CD8-positive, alpha-beta T cell (primary cell): ENCODE measurements at regions of chr14 and their contacts with region 1.

Region 1: GRCh38 chr14:64823305-64823861 is 56.3 kb downstream of the SPTB start:
- DNase-seq: peak; percentile 22 to 77 (median 62)
- ATAC-seq: peak; percentile 89
- H3K4me3 ChIP-seq: no peak overlapping the region
- H3K4me3 Mint-ChIP-seq: no peak overlapping the region
- H3K27ac ChIP-seq: no peak overlapping the region
- H3K27ac Mint-ChIP-seq: no peak overlapping the region
- H3K4me1 ChIP-seq: no peaks in the 10 kb centered on the region
- H3K4me1 Mint-ChIP-seq: peaks cover 6% of the 10 kb centered on the region
- H3K27me3 ChIP-seq: peaks cover 0 to 6% of the 10 kb centered on the region in 2 experiments
- H3K27me3 Mint-ChIP-seq: peaks cover 8% of the 10 kb centered on the region
- CTCF ChIP-seq: peak; percentile 75

Region 2: GRCh38 chr14:64835431-64835830 is 12.0 kb after region 1 on chr14:
- CTCF ChIA-PET with region 1: interaction called, 23 read pairs
- POLR2A ChIA-PET with region 1: no interaction called
- intact Hi-C with region 1: no loop called
- DNase-seq: no peak
- ATAC-seq: no peak
- H3K4me3 ChIP-seq: no peak overlapping the region
- H3K4me3 Mint-ChIP-seq: no peak overlapping the region
- H3K27ac ChIP-seq: no peak overlapping the region
- H3K27ac Mint-ChIP-seq: no peak overlapping the region
- H3K4me1 ChIP-seq: no peaks in the 10 kb centered on the region
- H3K4me1 Mint-ChIP-seq: no peaks in the 10 kb centered on the region
- H3K27me3 ChIP-seq: no peaks in the 10 kb centered on the region
- H3K27me3 Mint-ChIP-seq: peaks cover 11% of the 10 kb centered on the region
- CTCF ChIP-seq: no peak

Region 3: GRCh38 chr14:64841121-64841651 is 17.8 kb after region 1 on chr14:
- CTCF ChIA-PET with region 1: interaction called, 10 read pairs
- POLR2A ChIA-PET with region 1: no interaction called
- intact Hi-C with region 1: no loop called
- DNase-seq: no peak
- ATAC-seq: no peak
- H3K4me3 ChIP-seq: no peak overlapping the region
- H3K4me3 Mint-ChIP-seq: no peak overlapping the region
- H3K27ac ChIP-seq: no peak overlapping the region
- H3K27ac Mint-ChIP-seq: no peak overlapping the region
- H3K4me1 ChIP-seq: no peaks in the 10 kb centered on the region
- H3K4me1 Mint-ChIP-seq: no peaks in the 10 kb centered on the region
- H3K27me3 ChIP-seq: no peaks in the 10 kb centered on the region
- H3K27me3 Mint-ChIP-seq: peaks cover 31% of the 10 kb centered on the region
- CTCF ChIP-seq: no peak

Region 4: DNA sequence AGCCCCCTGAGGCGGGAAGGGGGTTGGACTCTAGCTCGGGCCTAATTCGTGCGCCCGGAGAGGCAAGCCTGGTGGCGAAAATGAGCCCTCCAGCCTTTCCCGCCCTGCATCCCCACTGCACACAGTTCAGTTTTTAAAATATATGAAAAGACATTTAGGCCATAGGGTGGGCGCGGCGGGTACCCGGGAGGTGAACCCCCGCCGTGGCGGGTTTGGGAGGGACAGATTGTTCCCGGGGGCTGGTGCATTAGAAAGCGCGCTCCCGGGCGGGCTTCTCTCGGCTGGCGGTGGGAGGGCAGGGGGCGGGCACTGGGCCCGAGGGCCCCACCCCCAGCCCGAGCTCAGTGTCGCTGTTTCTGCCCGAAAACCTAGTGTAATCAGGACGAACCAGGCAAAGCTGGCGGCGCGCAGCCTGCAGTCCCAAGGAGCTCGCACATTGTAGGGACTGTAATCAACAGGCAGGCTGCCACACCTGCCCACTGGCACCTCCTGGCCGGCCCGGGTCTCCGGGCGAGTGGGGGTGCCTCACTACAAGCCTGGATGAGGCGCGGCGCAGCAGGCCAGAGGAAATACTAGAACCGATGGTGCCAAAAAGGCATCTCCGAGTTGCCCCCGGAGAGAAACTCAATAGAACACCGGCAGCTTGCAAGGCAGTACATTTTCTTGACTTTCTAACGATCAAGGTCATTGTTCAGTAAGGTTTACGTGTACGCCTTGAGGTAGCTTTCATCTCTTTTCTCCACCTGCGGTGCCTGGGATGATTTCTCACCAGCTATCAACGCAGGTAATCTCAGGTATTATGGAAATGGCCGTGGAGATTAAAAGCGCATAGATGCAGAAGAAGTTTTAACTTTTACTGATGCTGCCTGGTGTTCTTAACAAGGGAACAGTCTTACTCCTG is 57.1 kb after region 1 on chr14:
- CTCF ChIA-PET with region 1: interaction called, 10 read pairs
- POLR2A ChIA-PET with region 1: no interaction called
- intact Hi-C with region 1: no loop called
- DNase-seq: peak; percentile 22 to 74 (median 59)
- ATAC-seq: peak; percentile 82
- H3K4me3 ChIP-seq: peak overlapping the region; percentile 51 to 62
- H3K4me3 Mint-ChIP-seq: peak overlapping the region; percentile 87
- H3K27ac ChIP-seq: no peak overlapping the region
- H3K27ac Mint-ChIP-seq: no peak overlapping the region
- H3K4me1 ChIP-seq: no peaks in the 10 kb centered on the region
- H3K4me1 Mint-ChIP-seq: peaks cover 8% of the 10 kb centered on the region
- H3K27me3 ChIP-seq: peaks cover 0 to 17% of the 10 kb centered on the region in 2 experiments
- H3K27me3 Mint-ChIP-seq: peaks cover 16% of the 10 kb centered on the region
- CTCF ChIP-seq: no peak

Region 5: GRCh38 chr14:64899958-64900357 is 76.6 kb after region 1 on chr14:
- CTCF ChIA-PET with region 1: interaction called, 11 read pairs
- POLR2A ChIA-PET with region 1: no interaction called
- intact Hi-C with region 1: no loop called
- DNase-seq: no peak
- ATAC-seq: no peak
- H3K4me3 ChIP-seq: no peak overlapping the region
- H3K4me3 Mint-ChIP-seq: no peak overlapping the region
- H3K27ac ChIP-seq: no peak overlapping the region
- H3K27ac Mint-ChIP-seq: no peak overlapping the region
- H3K4me1 ChIP-seq: no peaks in the 10 kb centered on the region
- H3K4me1 Mint-ChIP-seq: no peaks in the 10 kb centered on the region
- H3K27me3 ChIP-seq: no peaks in the 10 kb centered on the region
- H3K27me3 Mint-ChIP-seq: no peaks in the 10 kb centered on the region
- CTCF ChIP-seq: no peak

Region 6: DNA sequence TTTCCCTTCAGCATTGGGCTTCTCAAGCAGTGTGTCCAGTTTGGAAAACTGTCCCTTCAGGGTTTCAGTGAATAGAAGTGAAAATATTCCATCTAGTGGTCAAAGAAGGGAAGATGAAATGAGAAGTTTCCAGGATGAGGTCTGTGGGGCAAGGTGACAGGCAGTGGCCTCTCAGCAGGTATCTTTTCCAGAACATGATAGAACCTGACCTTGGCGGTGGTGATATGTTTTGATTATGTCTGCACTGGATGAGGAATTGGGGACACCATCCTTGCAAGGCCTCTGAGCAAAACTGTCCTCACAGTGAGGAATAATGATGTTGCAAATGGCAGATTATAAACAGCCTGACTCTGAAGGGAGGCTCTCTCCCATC is 114.4 kb after region 1 on chr14:
- CTCF ChIA-PET with region 1: interaction called, 9 read pairs
- POLR2A ChIA-PET with region 1: no interaction called
- intact Hi-C with region 1: loop called in 1 of 2 experiments (anchors 1 kb)
- DNase-seq: no peak
- ATAC-seq: no peak
- H3K4me3 ChIP-seq: no peak overlapping the region
- H3K4me3 Mint-ChIP-seq: no peak overlapping the region
- H3K27ac ChIP-seq: no peak overlapping the region
- H3K27ac Mint-ChIP-seq: peak overlapping the region; percentile 23
- H3K4me1 ChIP-seq: no peaks in the 10 kb centered on the region
- H3K4me1 Mint-ChIP-seq: peaks cover 72% of the 10 kb centered on the region
- H3K27me3 ChIP-seq: no peaks in the 10 kb centered on the region
- H3K27me3 Mint-ChIP-seq: no peaks in the 10 kb centered on the region
- CTCF ChIP-seq: no peak